Panc1 (cell line): ENCODE measurements at regions of chr5 and their contacts with region 1.

Region 1: GRCh38 chr5:77426670-77427069 is 65.4 kb downstream of the WDR41 start:
- DNase-seq: peak; percentile 10
- ATAC-seq: no peak
- H3K4me3 ChIP-seq: no peak overlapping the region
- H3K27ac ChIP-seq: no peak overlapping the region
- H3K4me1 ChIP-seq: no peaks in the 10 kb centered on the region
- H3K27me3 ChIP-seq: no peaks in the 10 kb centered on the region
- CTCF ChIP-seq: no peak

Region 2: GRCh38 chr5:77292026-77292757 is 134.5 kb before region 1 on chr5:
- CTCF ChIA-PET with region 1: no interaction called
- POLR2A ChIA-PET with region 1: interaction called, 11 read pairs
- in situ Hi-C with region 1: no loop called
- intact Hi-C with region 1: no loop called
- DNase-seq: no peak
- ATAC-seq: no peak
- H3K4me3 ChIP-seq: no peak overlapping the region
- H3K27ac ChIP-seq: no peak overlapping the region
- H3K4me1 ChIP-seq: no peaks in the 10 kb centered on the region
- H3K27me3 ChIP-seq: peaks cover 14% of the 10 kb centered on the region
- CTCF ChIP-seq: no peak